ENCODE measurements at regions of chr5 and their contacts with region 1.

Region 1: GRCh38 chr5:149141224-149141956 is at the start of gene ABLIM3:
- DNase-seq: peak; percentile 67 to 95 (median 78)
- ATAC-seq: peak; percentile 98
- H3K4me3 ChIP-seq: peak within 1 kb of the TSS; percentile 68 to 83
- H3K27ac ChIP-seq: peak within 1 kb of the TSS; percentile 60 to 75
- H3K4me1 ChIP-seq: peaks cover 0 to 36% of the 10 kb centered on the region in 2 donors
- H3K27me3 ChIP-seq: peaks cover 0 to 15% of the 10 kb centered on the region in 2 donors
- CTCF ChIP-seq: peak; percentile 97 to 98
- polyA plus RNA-seq, gene ABLIM3: 89.4 to 145 (median 113) TPM

Region 2: GRCh38 chr5:149228618-149229297 is 87.4 kb after region 1 on chr5:
- intact Hi-C with region 1: loop called in 1 of 2 experiments (anchors 5 kb)
- DNase-seq: peak in 2 of 4 donors; percentile 65 to 88
- ATAC-seq: peak; percentile 99
- H3K4me3 ChIP-seq: no peak overlapping the region
- H3K27ac ChIP-seq: peak overlapping the region in 1 of 2 donors; percentile 18
- H3K4me1 ChIP-seq: peaks cover 6 to 27% of the 10 kb centered on the region in 2 donors
- H3K27me3 ChIP-seq: no peaks in the 10 kb centered on the region
- CTCF ChIP-seq: peak; percentile 68 to 74

Measured in left lung (tissue), 14 donors.